Brain microvascular endothelial cell (primary cell): ENCODE measurements at regions of chr19 and their contacts with region 1.

Region 1: GRCh38 chr19:16247353-16248182 is 49.9 kb downstream of the AP1M1 start:
- DNase-seq: peak; percentile 70
- H3K4me3 ChIP-seq: no peak overlapping the region
- H3K27ac ChIP-seq: no peak overlapping the region
- H3K27me3 ChIP-seq: no peaks in the 10 kb centered on the region
- CTCF ChIP-seq: peak; percentile 96

Region 2: DNA sequence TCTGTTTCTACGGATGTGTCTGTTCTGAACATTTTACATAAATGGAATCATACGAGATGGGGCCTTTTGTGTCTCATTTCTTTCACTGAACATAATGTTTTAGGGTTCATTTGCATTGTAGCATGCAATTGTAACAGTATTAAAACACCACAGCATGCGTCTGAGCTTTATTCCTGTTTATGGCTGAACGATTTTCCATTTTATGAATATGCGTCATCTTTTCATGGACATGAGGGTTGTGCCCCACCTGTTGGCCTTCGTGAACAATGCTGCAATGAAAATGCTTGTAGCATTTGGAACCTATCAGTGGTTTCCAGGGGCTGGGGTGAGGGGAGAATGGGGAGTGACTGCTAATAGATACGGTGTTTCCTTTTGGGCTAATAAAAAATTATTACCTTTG is 437.2 kb before region 1 on chr19:
- in situ Hi-C with region 1: no loop called
- DNase-seq: no peak
- H3K4me3 ChIP-seq: no peak overlapping the region
- H3K27ac ChIP-seq: no peak overlapping the region
- H3K27me3 ChIP-seq: no peaks in the 10 kb centered on the region
- CTCF ChIP-seq: no peak

Region 3: DNA sequence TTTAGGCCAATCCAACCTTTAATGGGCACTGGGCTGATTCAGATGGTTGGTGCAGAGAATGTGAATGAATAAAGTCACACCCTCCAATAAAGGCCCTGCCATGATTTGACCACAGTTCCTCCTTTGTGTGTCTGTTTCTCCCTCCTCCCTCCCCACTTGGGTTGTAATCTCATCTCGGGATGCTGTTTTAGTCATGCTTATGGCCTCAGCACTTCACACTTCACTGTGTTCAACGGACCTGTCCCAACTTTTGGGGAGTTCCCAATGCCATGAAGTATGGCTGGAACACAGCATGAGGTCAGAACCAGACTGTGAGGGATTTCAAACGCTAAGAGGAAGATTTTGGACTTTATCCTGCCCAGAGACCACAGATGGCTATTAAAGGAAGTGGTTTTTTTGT is 141.4 kb before region 1 on chr19:
- in situ Hi-C with region 1: no loop called
- DNase-seq: no peak
- H3K4me3 ChIP-seq: no peak overlapping the region
- H3K27ac ChIP-seq: no peak overlapping the region
- H3K27me3 ChIP-seq: no peaks in the 10 kb centered on the region
- CTCF ChIP-seq: no peak

Region 4: GRCh38 chr19:16197188-16197621 is 50.4 kb before region 1 on chr19:
- in situ Hi-C with region 1: no loop called
- DNase-seq: peak; percentile 61
- H3K4me3 ChIP-seq: peak overlapping the region; percentile 97
- H3K27ac ChIP-seq: peak overlapping the region; percentile 65
- H3K27me3 ChIP-seq: no peaks in the 10 kb centered on the region
- CTCF ChIP-seq: no peak

Region 5: DNA sequence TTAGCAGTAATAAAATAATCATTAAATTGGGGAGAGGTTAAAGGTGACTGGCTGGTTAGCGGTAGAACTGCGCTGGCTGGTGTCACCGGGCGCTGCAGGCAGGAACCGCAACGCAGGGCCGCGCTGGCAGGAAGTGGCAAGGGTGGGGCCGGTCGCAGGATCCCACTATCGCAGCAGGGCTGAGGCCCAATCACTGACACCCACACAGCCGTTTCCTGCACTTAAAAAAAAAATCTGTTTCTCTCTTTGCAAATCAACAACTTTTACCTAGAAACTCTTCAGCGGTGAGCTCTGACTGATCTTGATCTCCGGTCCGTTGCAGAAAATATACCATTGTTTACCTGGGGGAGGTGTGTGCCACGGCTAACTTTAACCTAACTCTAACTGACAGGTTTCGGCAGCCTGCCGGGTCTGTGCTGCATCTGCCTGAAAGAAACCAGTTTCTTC is 124.0 kb after region 1 on chr19:
- in situ Hi-C with region 1: loop called (anchors 25 kb)
- DNase-seq: no peak
- H3K4me3 ChIP-seq: no peak overlapping the region
- H3K27ac ChIP-seq: no peak overlapping the region
- H3K27me3 ChIP-seq: no peaks in the 10 kb centered on the region
- CTCF ChIP-seq: no peak